ENCODE measurements at regions of chr20 and their contacts with region 1.

Region 1: GRCh38 chr20:43456809-43457639 is 672 bp upstream of the SRSF6 start:
- DNase-seq: peak; percentile 97
- ATAC-seq: peak; percentile 90
- H3K4me3 ChIP-seq: peak overlapping the region; percentile 86 to 96 (median 90)
- H3K27ac ChIP-seq: peak overlapping the region; percentile 97
- H3K4me1 ChIP-seq: peaks cover 59% of the 10 kb centered on the region
- H3K27me3 ChIP-seq: peaks cover 0 to 2% of the 10 kb centered on the region in 2 experiments; a peak in 1 of 5 replicates
- CTCF ChIP-seq: 0 out of 2 replicates have a peak, but pooled peaks have one; percentile 14
- EP300 ChIP-seq: no peak
- POLR2A ChIP-seq: peak in 1 of 2 experiments; percentile 72; a peak in 2 of 4 replicates
- RAD21 ChIP-seq: no peak

Region 2: GRCh38 chr20:43424394-43424793 is 32.6 kb before region 1 on chr20:
- CTCF ChIA-PET with region 1: no interaction called
- POLR2A ChIA-PET with region 1: no interaction called
- in situ Hi-C with region 1: no loop called
- intact Hi-C with region 1: no loop called
- DNase-seq: no peak
- ATAC-seq: no peak
- H3K4me3 ChIP-seq: no peak overlapping the region
- H3K27ac ChIP-seq: no peak overlapping the region
- H3K4me1 ChIP-seq: no peaks in the 10 kb centered on the region
- H3K27me3 ChIP-seq: peaks cover 5 to 21% of the 10 kb centered on the region in 2 experiments; a peak in 4 of 5 replicates
- CTCF ChIP-seq: no peak
- EP300 ChIP-seq: no peak
- POLR2A ChIP-seq: no peak
- RAD21 ChIP-seq: no peak

Region 3: GRCh38 chr20:43472671-43473380 is 15.8 kb after region 1 on chr20:
- CTCF ChIA-PET with region 1: no interaction called
- POLR2A ChIA-PET with region 1: interaction called, 13 read pairs
- in situ Hi-C with region 1: no loop called
- intact Hi-C with region 1: no loop called
- DNase-seq: no peak
- ATAC-seq: peak; percentile 2; the same call in 1 of the 3 replicates
- H3K4me3 ChIP-seq: no peak overlapping the region
- H3K27ac ChIP-seq: no peak overlapping the region
- H3K4me1 ChIP-seq: no peaks in the 10 kb centered on the region
- H3K27me3 ChIP-seq: no peaks in the 10 kb centered on the region
- CTCF ChIP-seq: peak; percentile 33
- EP300 ChIP-seq: no peak
- POLR2A ChIP-seq: no peak
- RAD21 ChIP-seq: no peak

Region 4: DNA sequence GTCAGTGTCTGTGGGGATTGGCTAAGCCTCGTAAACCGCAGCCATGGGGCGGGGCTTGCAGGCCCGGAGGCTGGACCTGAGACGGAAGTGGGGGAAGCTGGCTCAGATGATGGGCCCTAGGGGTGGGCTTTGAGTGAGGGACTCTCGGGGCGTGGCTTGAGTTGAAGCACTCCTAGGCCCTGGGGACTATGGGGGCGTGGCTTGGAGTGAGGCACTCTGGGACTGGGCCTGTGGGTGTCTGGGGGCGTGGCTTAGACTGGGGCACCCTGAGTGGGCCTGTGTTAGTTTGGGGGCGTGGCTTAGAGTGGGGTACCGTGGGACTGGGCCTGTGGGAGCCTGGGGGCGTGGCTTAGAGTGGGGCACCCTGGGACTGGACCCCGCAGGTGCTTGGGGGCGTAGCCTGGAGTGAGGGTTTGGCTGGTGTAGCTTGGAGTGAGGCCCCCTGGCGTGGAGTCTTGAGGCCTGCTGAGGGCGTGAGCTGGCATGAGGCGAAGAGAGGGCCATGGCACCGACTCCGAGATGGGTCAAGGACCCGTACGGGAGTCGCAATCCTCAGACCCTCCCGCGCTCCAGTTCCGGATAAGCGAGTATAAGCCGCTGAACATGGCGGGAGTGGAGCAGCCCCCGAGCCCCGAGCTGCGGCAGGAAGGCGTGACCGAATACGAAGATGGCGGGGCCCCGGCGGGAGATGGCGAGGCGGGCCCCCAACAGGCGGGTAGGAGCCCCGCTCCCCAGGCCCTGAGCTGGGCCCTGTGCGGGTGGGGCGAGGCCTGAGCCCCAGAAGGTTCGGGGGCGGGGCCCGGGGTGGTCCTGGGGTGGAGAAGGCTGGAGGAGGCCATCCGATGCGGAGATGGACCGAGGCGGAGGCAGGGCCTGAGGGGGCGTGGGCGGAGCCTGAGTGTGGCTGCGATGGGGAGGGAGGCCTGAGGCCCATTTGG is 57.3 kb after region 1 on chr20:
- CTCF ChIA-PET with region 1: no interaction called
- POLR2A ChIA-PET with region 1: interaction called, 77 read pairs
- in situ Hi-C with region 1: no loop called
- intact Hi-C with region 1: loop called (anchors 5 kb)
- DNase-seq: peak; percentile 100
- ATAC-seq: peak; percentile 87
- H3K4me3 ChIP-seq: peak overlapping the region; percentile 62 to 84 (median 81)
- H3K27ac ChIP-seq: peak overlapping the region; percentile 16
- H3K4me1 ChIP-seq: peaks cover 26% of the 10 kb centered on the region
- H3K27me3 ChIP-seq: no peaks in the 10 kb centered on the region
- CTCF ChIP-seq: peak; percentile 80
- EP300 ChIP-seq: no peak
- POLR2A ChIP-seq: peak; percentile 65 to 89
- RAD21 ChIP-seq: peak; percentile 69

Region 5: DNA sequence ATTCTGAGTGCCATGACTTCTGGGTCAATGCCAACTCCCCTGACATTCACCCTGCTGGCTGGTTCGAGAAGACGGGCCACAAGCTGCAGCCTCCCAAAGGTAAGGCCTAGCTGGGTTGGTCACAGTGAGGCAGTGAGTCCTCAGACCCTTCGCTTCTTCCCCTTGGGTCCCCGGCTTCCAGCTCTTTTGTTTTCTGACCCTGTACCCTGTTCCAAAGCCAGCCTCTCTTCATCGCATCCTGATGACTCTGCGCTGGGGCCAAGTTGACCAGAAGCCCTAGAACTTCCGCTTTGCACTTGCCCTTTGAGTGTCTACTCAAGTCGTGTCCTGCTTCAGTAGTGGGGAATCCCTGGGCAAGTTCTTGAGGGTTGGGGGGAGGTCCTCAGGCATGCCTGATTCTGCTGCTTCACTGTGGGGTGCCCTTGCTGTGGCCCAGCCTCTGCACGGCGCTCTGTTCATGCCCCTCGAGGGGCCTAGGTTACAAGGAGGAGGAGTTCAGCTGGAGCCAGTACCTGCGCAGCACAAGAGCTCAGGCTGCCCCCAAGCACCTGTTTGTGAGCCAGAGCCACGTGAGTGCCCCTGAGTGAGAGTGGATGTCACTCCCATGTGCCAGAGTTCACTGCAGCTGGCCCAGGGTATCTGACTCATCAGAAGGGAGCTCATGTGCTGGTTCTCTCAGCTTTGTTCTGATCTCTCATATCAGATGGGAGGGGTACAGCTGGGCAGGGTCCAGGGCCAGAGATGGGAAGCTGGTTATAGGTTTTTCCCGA is 73.5 kb after region 1 on chr20:
- CTCF ChIA-PET with region 1: no interaction called
- POLR2A ChIA-PET with region 1: interaction called, 34 read pairs
- in situ Hi-C with region 1: no loop called
- intact Hi-C with region 1: no loop called
- DNase-seq: peak; percentile 91
- ATAC-seq: peak; percentile 89
- H3K4me3 ChIP-seq: no peak overlapping the region
- H3K27ac ChIP-seq: peak overlapping the region; percentile 65
- H3K4me1 ChIP-seq: peaks cover 39% of the 10 kb centered on the region
- H3K27me3 ChIP-seq: no peaks in the 10 kb centered on the region
- CTCF ChIP-seq: peak; percentile 44
- EP300 ChIP-seq: peak in 1 of 2 experiments; percentile 43; a peak in 1 of 4 replicates
- POLR2A ChIP-seq: no peak
- RAD21 ChIP-seq: peak; percentile 58

Region 6: GRCh38 chr20:43590392-43591323 is 133.6 kb after region 1 on chr20 and contains the start of gene IFT52:
- CTCF ChIA-PET with region 1: no interaction called
- POLR2A ChIA-PET with region 1: interaction called, 31 read pairs
- in situ Hi-C with region 1: no loop called
- intact Hi-C with region 1: no loop called
- DNase-seq: peak; percentile 93
- ATAC-seq: peak; percentile 98
- H3K4me3 ChIP-seq: peak within 1 kb of the TSS; percentile 84 to 89 (median 86)
- H3K27ac ChIP-seq: peak within 1 kb of the TSS; percentile 79
- H3K4me1 ChIP-seq: peaks cover 32% of the 10 kb centered on the region
- H3K27me3 ChIP-seq: no peaks in the 10 kb centered on the region
- CTCF ChIP-seq: peak; percentile 35
- EP300 ChIP-seq: peak; percentile 17 to 39; a peak in 2 of 4 replicates
- POLR2A ChIP-seq: peak; percentile 53 to 88; a peak in 3 of 4 replicates
- RAD21 ChIP-seq: peak; percentile 37; the same call in 1 of the 2 replicates
- total RNA-seq, gene IFT52: 64.0 and 80.6 TPM in 2 replicates